Activated CD4-positive, alpha-beta memory T cell treated with anti-CD3 and anti-CD28 coated beads for 36 hours (primary cell): ENCODE measurements at regions of chr14 and their contacts with region 1.

Region 1: GRCh38 chr14:89416002-89416995 is 734 bp downstream of the FOXN3 start:
- DNase-seq: peak; percentile 99
- H3K4me3 Mint-ChIP-seq: peak overlapping the region; percentile 87
- H3K27ac Mint-ChIP-seq: peak overlapping the region; percentile 81
- H3K4me1 Mint-ChIP-seq: peaks cover 46% of the 10 kb centered on the region
- H3K27me3 Mint-ChIP-seq: no peaks in the 10 kb centered on the region

Region 2: GRCh38 chr14:88492272-88493089 is 923.8 kb before region 1 on chr14:
- CTCF ChIA-PET with region 1: no interaction called
- POLR2A ChIA-PET with region 1: no interaction called
- intact Hi-C with region 1: no loop called
- DNase-seq: peak; percentile 58
- H3K4me3 Mint-ChIP-seq: no peak overlapping the region
- H3K27ac Mint-ChIP-seq: no peak overlapping the region
- H3K4me1 Mint-ChIP-seq: peaks cover 2% of the 10 kb centered on the region
- H3K27me3 Mint-ChIP-seq: peaks cover 4% of the 10 kb centered on the region

Region 3: GRCh38 chr14:89040460-89041259 is 375.6 kb before region 1 on chr14:
- CTCF ChIA-PET with region 1: interaction called, 4 read pairs
- POLR2A ChIA-PET with region 1: no interaction called
- intact Hi-C with region 1: loop called (anchors 2 kb)
- DNase-seq: peak; percentile 87
- H3K4me3 Mint-ChIP-seq: peak overlapping the region; percentile 62
- H3K27ac Mint-ChIP-seq: no peak overlapping the region
- H3K4me1 Mint-ChIP-seq: peaks cover 4% of the 10 kb centered on the region
- H3K27me3 Mint-ChIP-seq: peaks cover 15% of the 10 kb centered on the region

Region 4: GRCh38 chr14:89276424-89276975 is 139.8 kb before region 1 on chr14:
- CTCF ChIA-PET with region 1: no interaction called
- POLR2A ChIA-PET with region 1: no interaction called
- intact Hi-C with region 1: loop called (anchors 5 kb)
- DNase-seq: peak; percentile 92
- H3K4me3 Mint-ChIP-seq: peak overlapping the region; percentile 60
- H3K27ac Mint-ChIP-seq: peak overlapping the region; percentile 94
- H3K4me1 Mint-ChIP-seq: peaks cover 77% of the 10 kb centered on the region
- H3K27me3 Mint-ChIP-seq: no peaks in the 10 kb centered on the region

Region 5: DNA sequence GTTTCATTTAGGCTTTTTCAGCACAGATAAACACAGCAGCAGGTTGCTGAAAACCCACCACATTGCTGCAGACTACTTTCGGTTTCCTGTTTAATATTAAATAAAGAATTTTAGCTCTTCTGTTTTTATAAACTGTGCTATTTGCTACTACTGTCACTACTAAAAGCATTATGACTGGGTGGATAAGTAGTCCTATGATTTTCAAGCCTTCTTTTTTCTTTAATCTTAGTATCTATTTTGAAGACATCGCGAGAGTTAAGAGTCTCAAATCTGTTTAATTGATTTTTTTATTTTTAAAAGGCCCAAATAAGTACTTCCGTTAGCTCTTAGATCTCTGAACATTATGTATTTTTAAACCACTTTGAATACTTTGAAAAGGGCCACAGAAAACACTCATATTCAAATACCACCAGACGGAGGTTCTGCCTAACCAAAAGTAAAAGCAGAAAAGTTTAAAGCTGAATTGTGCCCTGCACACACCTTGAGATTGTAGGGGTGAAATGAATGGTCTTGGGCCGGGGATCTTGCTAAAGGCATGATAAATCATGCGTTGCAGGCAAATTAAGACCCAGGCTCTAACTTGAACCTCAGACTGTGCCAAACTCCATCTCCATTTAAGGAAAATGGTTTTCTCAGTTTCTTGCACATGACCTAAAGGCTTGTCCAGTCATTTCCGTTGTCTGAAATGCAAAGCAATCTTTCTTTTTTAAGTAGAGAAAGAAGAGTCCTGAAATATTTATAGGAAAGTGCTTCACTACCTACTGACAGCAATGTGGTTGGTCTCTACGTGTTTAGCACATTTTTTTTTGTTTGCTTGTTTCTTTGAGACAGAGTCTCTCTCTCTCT is 14.3 kb after region 1 on chr14:
- CTCF ChIA-PET with region 1: no interaction called
- POLR2A ChIA-PET with region 1: interaction called, 15 read pairs
- intact Hi-C with region 1: loop called (anchors 1 kb)
- DNase-seq: peak; percentile 75
- H3K4me3 Mint-ChIP-seq: peak overlapping the region; percentile 67
- H3K27ac Mint-ChIP-seq: peak overlapping the region; percentile 88
- H3K4me1 Mint-ChIP-seq: peaks cover 69% of the 10 kb centered on the region
- H3K27me3 Mint-ChIP-seq: no peaks in the 10 kb centered on the region

Region 6: DNA sequence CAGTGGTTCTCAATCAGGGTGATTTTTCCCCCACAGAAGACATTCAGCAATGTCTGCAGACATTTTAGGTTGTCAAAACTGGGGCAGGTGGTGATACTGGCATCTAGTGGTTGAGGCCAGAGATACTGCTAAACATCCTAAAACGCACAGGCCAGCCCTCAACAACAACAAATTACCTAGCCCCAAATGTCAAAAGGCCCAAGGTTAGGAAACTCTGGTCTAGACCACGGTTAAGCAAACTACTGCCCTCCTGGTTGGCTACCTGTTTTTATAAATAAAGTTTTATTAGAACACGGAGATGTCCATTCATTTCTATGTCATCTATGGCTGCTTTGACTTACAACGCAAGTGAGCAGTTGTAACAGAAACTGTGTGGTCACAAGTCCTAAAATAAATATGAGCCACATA is 351.6 kb after region 1 on chr14:
- CTCF ChIA-PET with region 1: interaction called, 3 read pairs
- POLR2A ChIA-PET with region 1: no interaction called
- intact Hi-C with region 1: loop called (anchors 2 kb)
- DNase-seq: peak; percentile 75
- H3K4me3 Mint-ChIP-seq: no peak overlapping the region
- H3K27ac Mint-ChIP-seq: peak overlapping the region; percentile 39
- H3K4me1 Mint-ChIP-seq: peaks cover 18% of the 10 kb centered on the region
- H3K27me3 Mint-ChIP-seq: peaks cover 2% of the 10 kb centered on the region